Right cardiac atrium (tissue), 5 donors: ENCODE measurements at regions of chr15 and their contacts with region 1.

Region 1: GRCh38 chr15:66386204-66387123 is at the start of gene MAP2K1:
- DNase-seq: peak; percentile 99
- ATAC-seq: peak; percentile 99
- H3K4me3 ChIP-seq: peak within 1 kb of the TSS; percentile 92
- H3K27ac ChIP-seq: peak within 1 kb of the TSS; percentile 79
- H3K4me1 ChIP-seq: peaks cover 6% of the 10 kb centered on the region
- H3K27me3 ChIP-seq: no peaks in the 10 kb centered on the region
- total RNA-seq, gene MAP2K1: 38.2 to 45.9 (median 39.2) TPM

Region 2: GRCh38 chr15:66489179-66489791 is 102.8 kb after region 1 on chr15:
- intact Hi-C with region 1: loop called in 3 of 4 experiments (anchors 5 to 10 kb)
- DNase-seq: no peak
- ATAC-seq: no peak
- H3K4me3 ChIP-seq: no peak overlapping the region
- H3K27ac ChIP-seq: no peak overlapping the region
- H3K4me1 ChIP-seq: no peaks in the 10 kb centered on the region
- H3K27me3 ChIP-seq: no peaks in the 10 kb centered on the region

Region 3: GRCh38 chr15:66497502-66498455 is 111.3 kb after region 1 on chr15 and contains the start of gene SNAPC5:
- intact Hi-C with region 1: loop called in 2 of 4 experiments (anchors 10 kb)
- DNase-seq: peak; percentile 97 to 99 (median 98)
- ATAC-seq: peak; percentile 96
- H3K4me3 ChIP-seq: peak within 1 kb of the TSS; percentile 81
- H3K27ac ChIP-seq: peak within 1 kb of the TSS; percentile 89
- H3K4me1 ChIP-seq: peaks cover 3% of the 10 kb centered on the region
- H3K27me3 ChIP-seq: no peaks in the 10 kb centered on the region
- total RNA-seq, gene SNAPC5: 33.9 to 45.5 (median 38.9) TPM

Region 4: DNA sequence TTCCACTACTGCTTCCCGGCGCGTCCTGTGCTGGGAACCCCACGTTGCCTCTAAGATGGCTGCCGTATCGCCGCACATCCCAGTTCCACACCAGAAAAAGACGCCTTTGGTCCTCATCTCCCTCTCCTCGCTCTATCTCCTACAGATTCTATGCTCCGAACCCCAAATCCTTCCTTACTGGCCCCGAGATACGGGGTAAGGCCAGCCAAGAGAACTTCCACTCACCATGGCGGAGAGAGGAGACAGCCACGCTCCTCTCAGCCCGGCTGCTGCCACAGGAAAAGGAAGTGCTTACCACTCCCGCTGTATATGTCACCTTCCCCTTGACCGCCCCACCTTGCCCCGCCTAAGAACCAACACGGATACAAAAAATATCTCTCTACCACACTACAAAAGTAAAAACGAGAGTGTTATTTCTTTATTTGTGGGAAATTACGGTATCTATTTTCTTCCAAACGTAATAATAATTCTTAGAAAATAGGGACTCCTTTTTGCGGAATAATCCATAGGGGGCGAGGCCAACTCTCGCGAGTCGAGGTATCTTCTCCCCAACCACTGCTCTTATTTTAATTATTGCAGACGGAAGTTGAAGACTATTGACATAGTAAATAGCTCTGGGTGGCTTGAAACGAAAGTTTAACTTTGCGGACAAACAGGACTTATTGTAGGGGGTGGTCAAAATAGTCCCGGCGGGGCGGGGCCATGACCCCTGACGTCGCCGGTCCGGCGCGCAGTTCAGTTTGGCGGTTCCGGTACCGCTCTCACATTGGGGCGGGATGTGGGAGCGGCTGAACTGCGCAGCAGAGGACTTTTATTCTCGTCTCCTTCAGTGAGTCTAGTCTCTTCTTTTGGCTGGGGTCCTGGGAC is 118.3 kb after region 1 on chr15 and contains the starts of genes RPL4 and ZWILCH:
- intact Hi-C with region 1: loop called in 3 of 4 experiments (anchors 2 to 10 kb)
- DNase-seq: peak; percentile 88 to 92 (median 92)
- ATAC-seq: peak; percentile 96
- H3K4me3 ChIP-seq: peak within 1 kb of the TSS; percentile 75
- H3K27ac ChIP-seq: peak within 1 kb of the TSS; percentile 94
- H3K4me1 ChIP-seq: no peaks in the 10 kb centered on the region
- H3K27me3 ChIP-seq: no peaks in the 10 kb centered on the region
- total RNA-seq, gene RPL4: 1,385 to 1,717 (median 1,488) TPM
- total RNA-seq, gene ZWILCH: 2.2 to 3.7 (median 2.7) TPM

Region 5: DNA sequence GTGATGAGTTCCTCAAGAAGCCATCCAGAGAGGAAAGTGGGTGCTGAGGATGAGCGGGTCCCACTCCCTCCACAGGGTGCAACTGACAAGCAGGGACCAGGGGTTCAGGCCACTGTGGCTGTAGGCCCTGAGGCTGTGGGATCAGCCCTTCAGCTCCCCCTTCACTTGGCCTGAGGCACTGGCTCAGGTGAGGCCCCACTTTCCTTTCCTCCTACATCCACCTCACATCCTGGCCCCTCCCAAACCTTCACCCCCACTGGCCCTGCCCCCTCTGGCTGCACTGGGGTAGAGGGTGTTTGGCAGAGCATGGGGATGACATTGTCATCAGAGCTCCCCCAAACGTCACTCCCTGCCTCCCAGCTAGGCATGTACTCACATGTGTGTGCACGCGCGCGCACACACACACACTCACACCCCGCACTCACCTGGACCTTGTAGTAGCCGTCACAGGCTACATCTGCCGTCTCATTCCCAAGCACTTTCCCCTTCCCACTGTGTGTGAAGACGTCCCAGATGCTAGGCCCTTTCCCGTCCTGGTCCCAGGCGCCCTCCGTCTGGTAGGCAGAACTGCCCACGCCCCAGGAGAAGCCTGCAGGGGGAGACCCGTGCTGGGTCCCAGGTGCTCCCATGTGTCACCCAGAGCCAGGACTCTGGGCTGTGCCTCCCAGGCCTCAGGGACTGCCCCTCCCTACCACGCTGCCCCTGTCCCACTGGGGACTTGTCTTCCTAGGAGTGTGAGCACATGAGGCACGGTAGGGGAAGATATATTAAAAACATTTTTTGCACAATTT is 178.0 kb after region 1 on chr15:
- intact Hi-C with region 1: no loop called
- DNase-seq: no peak
- ATAC-seq: no peak
- H3K4me3 ChIP-seq: no peak overlapping the region
- H3K27ac ChIP-seq: no peak overlapping the region
- H3K4me1 ChIP-seq: no peaks in the 10 kb centered on the region
- H3K27me3 ChIP-seq: no peaks in the 10 kb centered on the region